ENCODE measurements at regions of chr20 and their contacts with region 1.

Region 1: DNA sequence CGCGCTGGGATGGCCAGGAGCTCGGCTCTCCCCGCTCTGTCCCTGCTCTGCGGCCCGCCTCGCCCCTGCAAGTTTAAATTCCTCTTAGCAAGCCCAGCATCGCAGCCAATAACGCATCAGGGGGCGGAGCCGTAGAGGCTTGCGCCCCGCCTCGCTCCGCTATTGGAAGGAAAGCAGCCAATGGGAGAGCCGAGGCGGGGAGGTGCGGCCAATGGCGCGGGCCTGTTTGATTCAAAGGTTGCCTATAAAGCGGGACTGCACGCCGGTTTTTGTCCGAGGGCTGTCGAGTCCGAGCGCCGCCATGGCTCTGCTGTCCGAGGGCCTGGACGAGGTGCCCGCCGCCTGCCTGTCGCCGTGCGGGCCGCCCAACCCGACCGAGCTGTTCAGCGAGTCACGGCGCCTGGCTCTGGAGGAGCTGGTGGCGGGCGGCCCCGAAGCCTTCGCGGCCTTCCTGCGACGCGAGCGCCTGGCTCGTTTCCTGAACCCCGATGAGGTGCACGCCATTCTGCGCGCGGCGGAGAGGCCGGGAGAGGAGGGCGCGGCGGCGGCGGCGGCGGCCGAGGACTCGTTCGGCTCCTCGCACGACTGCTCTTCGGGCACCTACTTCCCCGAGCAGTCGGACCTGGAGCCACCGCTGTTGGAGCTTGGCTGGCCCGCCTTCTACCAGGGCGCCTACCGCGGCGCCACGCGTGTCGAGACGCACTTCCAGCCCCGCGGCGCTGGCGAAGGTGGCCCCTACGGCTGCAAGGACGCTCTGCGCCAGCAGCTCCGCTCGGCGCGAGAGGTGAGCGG is at the start of gene FAM83D:
- DNase-seq: peak; percentile 99
- ATAC-seq: peak; percentile 98
- H3K4me3 Mint-ChIP-seq: peak within 1 kb of the TSS; percentile 81
- H3K27ac Mint-ChIP-seq: peak within 1 kb of the TSS; percentile 19
- H3K4me1 Mint-ChIP-seq: peaks cover 21% of the 10 kb centered on the region
- H3K27me3 Mint-ChIP-seq: no peaks in the 10 kb centered on the region
- total RNA-seq, gene FAM83D: 10.5 to 12.4 TPM

Region 2: GRCh38 chr20:38645980-38646858 is 280.1 kb before region 1 on chr20:
- CTCF ChIA-PET with region 1: interaction called, 3 read pairs
- POLR2A ChIA-PET with region 1: interaction called, 3 read pairs
- intact Hi-C with region 1: loop called in 1 of 2 experiments (anchors 1 kb)
- DNase-seq: peak; percentile 93
- ATAC-seq: peak; percentile 98
- H3K4me3 Mint-ChIP-seq: peak overlapping the region; percentile 44
- H3K27ac Mint-ChIP-seq: peak overlapping the region; percentile 41
- H3K4me1 Mint-ChIP-seq: peaks cover 7% of the 10 kb centered on the region
- H3K27me3 Mint-ChIP-seq: peaks cover 30% of the 10 kb centered on the region

Region 3: DNA sequence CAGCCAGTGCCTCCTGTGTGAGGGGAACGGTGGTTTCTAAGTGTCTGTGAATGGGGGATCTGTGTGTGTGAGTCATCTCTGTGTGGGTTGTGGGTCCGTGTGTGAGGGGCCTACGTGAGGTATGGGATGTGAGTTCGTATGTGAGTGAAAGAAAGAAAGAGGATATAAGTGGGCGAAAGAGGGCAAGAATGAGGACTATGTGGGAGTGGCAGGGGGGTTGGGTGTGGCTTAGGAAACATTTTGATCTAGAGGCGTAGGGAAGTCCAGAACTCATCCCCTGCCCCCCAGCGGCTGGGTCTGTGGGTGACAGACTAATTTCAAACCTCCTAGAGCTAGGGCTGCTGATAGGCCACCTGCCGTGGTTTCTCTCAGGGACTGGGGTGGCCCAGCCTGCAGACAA is 71.3 kb after region 1 on chr20:
- CTCF ChIA-PET with region 1: interaction called, 4 read pairs
- POLR2A ChIA-PET with region 1: no interaction called
- intact Hi-C with region 1: loop called in 1 of 2 experiments (anchors 1 kb)
- DNase-seq: peak; percentile 83
- ATAC-seq: peak; percentile 89
- H3K4me3 Mint-ChIP-seq: no peak overlapping the region
- H3K27ac Mint-ChIP-seq: peak overlapping the region; percentile 19
- H3K4me1 Mint-ChIP-seq: peaks cover 28% of the 10 kb centered on the region
- H3K27me3 Mint-ChIP-seq: no peaks in the 10 kb centered on the region

Region 4: GRCh38 chr20:39019805-39020325 is 93.5 kb after region 1 on chr20:
- CTCF ChIA-PET with region 1: no interaction called
- POLR2A ChIA-PET with region 1: no interaction called
- intact Hi-C with region 1: loop called in 1 of 2 experiments (anchors 1 kb)
- DNase-seq: peak; percentile 74
- ATAC-seq: peak; percentile 89
- H3K4me3 Mint-ChIP-seq: no peak overlapping the region
- H3K27ac Mint-ChIP-seq: peak overlapping the region; percentile 55
- H3K4me1 Mint-ChIP-seq: peaks cover 57% of the 10 kb centered on the region
- H3K27me3 Mint-ChIP-seq: no peaks in the 10 kb centered on the region

Region 5: GRCh38 chr20:39081255-39081654 is 154.9 kb after region 1 on chr20:
- CTCF ChIA-PET with region 1: interaction called, 3 read pairs
- POLR2A ChIA-PET with region 1: no interaction called
- intact Hi-C with region 1: loop called in 1 of 2 experiments (anchors 1 kb)
- DNase-seq: peak; percentile 90
- ATAC-seq: peak; percentile 78
- H3K4me3 Mint-ChIP-seq: no peak overlapping the region
- H3K27ac Mint-ChIP-seq: no peak overlapping the region
- H3K4me1 Mint-ChIP-seq: no peaks in the 10 kb centered on the region
- H3K27me3 Mint-ChIP-seq: peaks cover 11% of the 10 kb centered on the region

Measured in activated CD4-positive, alpha-beta T cell treated with anti-CD3 and anti-CD28 coated beads for 36 hours (primary cell).